GM13976 (cell line): ENCODE measurements at regions of chr16 and their contacts with region 1.

Region 1: GRCh38 chr16:84511180-84511824 is 6.8 kb upstream of the MEAK7 start:
- DNase-seq: peak; percentile 70
- CTCF ChIP-seq: peak; percentile 90

Region 2: DNA sequence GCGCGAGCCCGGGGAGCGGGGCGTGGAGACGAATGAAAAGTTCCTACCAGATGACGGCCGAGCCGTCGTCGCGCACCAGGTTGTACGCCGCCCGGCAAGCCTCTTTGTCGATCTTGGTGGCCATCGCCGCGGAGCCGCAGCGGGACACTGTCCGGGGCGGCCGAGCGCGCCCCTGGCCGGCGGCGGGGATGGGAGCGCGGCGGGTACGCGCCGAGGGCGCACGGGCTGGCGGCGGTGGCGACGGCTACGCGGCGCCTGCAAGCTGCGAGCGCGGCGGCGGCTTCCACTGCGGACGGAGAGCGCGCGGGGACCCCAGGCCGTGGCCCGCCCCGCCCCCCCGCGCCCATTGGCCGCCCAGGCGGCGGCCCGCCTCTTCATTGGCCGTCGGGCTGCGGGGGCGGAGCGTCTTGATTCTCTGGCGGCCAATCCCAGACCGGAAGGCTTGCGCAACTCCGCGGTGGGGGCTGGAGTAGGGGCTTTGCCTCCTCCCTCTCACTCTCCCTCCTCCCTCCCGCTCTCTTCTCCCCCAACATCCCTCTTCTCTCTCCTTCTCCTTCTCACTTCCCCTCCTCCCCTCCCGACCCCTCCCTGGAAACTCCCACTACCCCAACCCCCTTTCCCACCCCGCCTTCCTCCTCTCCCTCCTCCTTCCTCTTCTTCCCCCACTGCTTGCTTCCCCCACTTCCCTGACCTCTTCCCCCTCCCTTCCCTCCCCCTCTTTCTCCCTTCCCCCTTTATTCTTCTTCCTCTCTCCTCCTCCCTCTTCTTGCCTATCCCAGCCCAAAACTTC is 106.7 kb after region 1 on chr16 and contains the start of gene COTL1:
- in situ Hi-C with region 1: loop called (anchors 5 kb)
- DNase-seq: peak; percentile 97
- CTCF ChIP-seq: peak; percentile 8

Region 3: DNA sequence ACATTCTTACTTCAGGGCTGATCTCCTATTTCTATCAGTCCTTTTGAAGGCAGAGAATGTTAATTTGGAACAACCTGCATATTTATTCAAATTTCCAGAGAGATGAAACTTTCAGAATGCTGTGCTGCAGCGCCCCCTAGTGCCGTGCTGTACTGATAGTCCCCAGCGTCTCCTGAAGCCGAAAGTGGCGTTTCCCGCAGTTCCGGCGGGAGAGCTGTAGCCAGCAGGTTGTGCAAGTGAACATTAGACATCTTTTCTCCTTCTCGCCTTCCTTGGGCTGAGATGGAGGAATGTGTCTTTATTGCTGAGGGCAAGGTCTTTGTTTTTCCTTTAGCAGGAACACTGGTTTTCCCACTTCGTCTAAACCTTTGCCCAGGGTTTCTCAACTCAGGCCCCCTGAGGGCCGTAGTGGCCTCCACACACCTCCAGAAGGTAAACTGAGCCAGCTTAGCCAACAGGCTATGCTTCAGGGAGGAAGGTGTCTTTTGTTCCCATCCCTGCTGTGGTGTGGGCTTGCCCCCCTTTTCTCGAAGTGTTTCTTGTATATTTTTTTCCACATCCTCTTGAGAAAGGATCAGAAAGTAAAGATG is 214.9 kb after region 1 on chr16:
- in situ Hi-C with region 1: loop called (anchors 10 kb)
- DNase-seq: peak; percentile 55
- CTCF ChIP-seq: peak; percentile 81

Region 4: GRCh38 chr16:84765616-84766580 is 254.6 kb after region 1 on chr16:
- in situ Hi-C with region 1: no loop called
- DNase-seq: no peak
- CTCF ChIP-seq: no peak